GM12878 (cell line): ENCODE measurements at regions of chr5 and their contacts with region 1.

Region 1: DNA sequence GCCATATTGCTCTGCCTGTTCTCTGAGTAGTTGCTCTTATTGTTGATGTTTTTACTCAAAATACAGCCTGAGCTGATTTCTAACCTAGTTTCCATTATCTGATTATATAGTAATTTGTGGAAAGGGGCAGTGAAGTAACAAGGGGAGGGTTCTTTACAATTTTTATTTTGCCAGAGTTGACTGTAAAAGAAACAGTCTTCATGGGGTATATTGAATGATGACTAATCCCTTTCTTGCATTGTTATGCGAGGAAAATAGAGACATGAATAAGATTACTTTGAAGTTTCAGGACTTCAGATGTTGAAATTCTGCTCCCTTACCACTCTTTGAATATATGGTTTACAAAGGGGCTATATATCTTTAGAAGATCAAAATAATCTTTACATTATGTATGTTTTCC is 9.1 kb upstream of the LRRC70 start:
- DNase-seq: no peak
- ATAC-seq: peak; percentile 21; the same call in 1 of the 3 replicates
- H3K4me3 ChIP-seq: no peak overlapping the region
- H3K27ac ChIP-seq: no peak overlapping the region
- H3K4me1 ChIP-seq: peaks cover 4% of the 10 kb centered on the region
- H3K27me3 ChIP-seq: no peaks in the 10 kb centered on the region
- CTCF ChIP-seq: no peak
- EP300 ChIP-seq: no peak
- POLR2A ChIP-seq: no peak
- RAD21 ChIP-seq: no peak

Region 2: GRCh38 chr5:61775906-61776305 is 793.6 kb before region 1 on chr5:
- CTCF ChIA-PET with region 1: no interaction called
- POLR2A ChIA-PET with region 1: no interaction called
- RAD21 ChIA-PET with region 1: no interaction called
- SMC1A ChIA-PET with region 1: no interaction called
- in situ Hi-C with region 1: no loop called
- intact Hi-C with region 1: no loop called
- DNase-seq: no peak
- ATAC-seq: no peak
- H3K4me3 ChIP-seq: no peak overlapping the region
- H3K27ac ChIP-seq: no peak overlapping the region
- H3K4me1 ChIP-seq: no peaks in the 10 kb centered on the region
- H3K27me3 ChIP-seq: 0 out of 4 replicates have a peak, but pooled peaks cover 0 to 3% of the 10 kb centered on the region in 2 experiments
- CTCF ChIP-seq: no peak
- EP300 ChIP-seq: no peak
- POLR2A ChIP-seq: no peak
- RAD21 ChIP-seq: no peak

Region 3: DNA sequence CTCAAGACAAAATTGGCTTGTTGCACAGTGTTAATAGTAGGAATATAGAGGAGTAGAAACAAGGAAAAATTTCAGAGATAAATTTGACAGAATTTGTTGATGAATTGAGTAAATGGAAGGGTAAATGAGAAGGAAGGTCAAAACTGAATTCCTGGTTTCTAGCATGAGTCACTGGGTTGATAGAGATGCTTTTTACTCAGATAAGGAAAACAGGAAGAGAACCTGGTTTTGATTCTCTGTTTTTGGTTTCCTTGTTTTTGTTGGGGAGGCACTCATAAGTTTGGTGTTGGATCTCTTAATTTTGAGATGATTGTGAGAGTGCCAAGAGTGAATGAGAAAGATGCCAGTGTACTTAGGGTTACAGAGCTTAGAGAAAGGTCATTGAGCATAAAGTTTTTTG is 16.3 kb after region 1 on chr5:
- CTCF ChIA-PET with region 1: interaction called, 4 read pairs
- POLR2A ChIA-PET with region 1: no interaction called
- RAD21 ChIA-PET with region 1: no interaction called
- SMC1A ChIA-PET with region 1: interaction called, 19 read pairs
- in situ Hi-C with region 1: no loop called
- intact Hi-C with region 1: no loop called
- DNase-seq: no peak
- ATAC-seq: no peak
- H3K4me3 ChIP-seq: no peak overlapping the region
- H3K27ac ChIP-seq: no peak overlapping the region
- H3K4me1 ChIP-seq: no peaks in the 10 kb centered on the region
- H3K27me3 ChIP-seq: no peaks in the 10 kb centered on the region
- CTCF ChIP-seq: no peak
- EP300 ChIP-seq: no peak
- POLR2A ChIP-seq: no peak
- RAD21 ChIP-seq: no peak